Activated T-helper 2 cell treated with anti-CD3 and anti-CD28 coated beads, Interferon-gamma antibody, Interleukin-2, Interleukin-4, amounts not matched to agents 10 μg/mL and 5 μg/mL and 100 μg/mL, durations not matched to agents 14 hours and 24 hours and 36 hours (primary cell): ENCODE measurements at regions of chr17 and their contacts with region 1.

Region 1: DNA sequence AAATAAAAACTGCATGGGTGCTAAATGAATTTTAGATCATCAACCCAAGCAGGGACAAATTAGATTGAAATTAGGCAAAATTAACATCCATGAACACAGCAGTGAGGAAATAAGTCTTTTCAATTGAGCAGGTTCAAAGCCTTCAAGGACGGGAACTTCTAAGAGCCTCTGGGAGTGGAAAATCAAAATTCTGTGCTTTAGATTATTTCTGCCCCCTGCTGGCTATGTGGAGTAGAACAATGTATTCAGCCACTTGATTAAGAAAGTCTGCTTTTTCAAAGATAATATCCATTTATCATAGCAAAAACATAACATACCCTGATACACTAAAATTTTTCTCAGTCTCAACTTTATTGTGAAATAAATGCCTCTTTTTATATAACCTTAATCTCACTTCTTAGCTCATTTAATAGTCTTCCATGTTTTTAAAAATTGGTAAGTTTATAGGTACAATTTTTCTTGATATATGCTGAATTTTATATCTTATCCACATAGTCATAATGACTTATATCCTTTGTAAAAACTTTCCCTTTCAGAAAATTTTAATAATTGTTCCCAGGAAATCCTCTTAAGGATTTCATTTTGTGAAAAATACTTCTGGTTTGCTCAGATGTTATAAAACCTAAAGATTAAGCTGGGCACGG is 28.1 kb upstream of the NOL11 start:
- DNase-seq: peak; percentile 23
- H3K4me3 Mint-ChIP-seq: no peak overlapping the region
- H3K27ac Mint-ChIP-seq: no peak overlapping the region
- H3K4me1 Mint-ChIP-seq: peaks cover 3% of the 10 kb centered on the region
- H3K27me3 Mint-ChIP-seq: no peaks in the 10 kb centered on the region

Region 2: DNA sequence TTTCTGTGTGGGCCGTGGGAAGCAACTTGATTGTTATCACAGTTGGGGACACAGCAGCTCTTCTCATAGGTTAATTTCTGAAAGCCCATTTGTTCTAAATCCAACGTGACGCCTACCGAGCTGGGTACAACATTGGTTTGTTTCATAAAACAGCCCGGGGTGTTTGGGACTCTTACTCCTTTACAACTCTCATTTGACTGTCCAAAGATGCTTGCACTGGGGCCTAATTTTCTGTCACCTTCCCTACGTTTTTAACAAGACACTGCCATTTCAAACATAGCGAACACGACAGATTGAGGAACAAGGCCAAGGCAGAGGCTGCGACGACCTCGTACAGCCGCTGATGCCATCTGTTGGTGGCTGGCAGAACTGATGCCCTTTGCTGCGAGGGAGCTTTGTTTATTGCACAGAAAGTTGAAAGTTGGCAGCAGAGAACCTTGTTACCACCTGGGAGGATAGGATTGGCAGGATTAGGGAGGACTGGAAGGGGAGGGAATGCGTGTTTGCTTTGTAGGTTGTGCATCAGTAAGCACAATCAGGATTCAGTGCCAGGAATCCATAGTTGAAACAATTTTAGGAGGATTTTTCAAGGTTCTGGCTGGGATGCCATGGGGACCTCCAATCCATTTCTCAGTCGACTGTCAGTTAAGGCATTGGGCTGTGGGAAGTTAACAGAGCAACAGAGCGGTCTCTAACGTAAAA is 214.3 kb before region 1 on chr17:
- intact Hi-C with region 1: loop called (anchors 1 kb)
- DNase-seq: peak; percentile 77
- H3K4me3 Mint-ChIP-seq: peak overlapping the region; percentile 30
- H3K27ac Mint-ChIP-seq: peak overlapping the region; percentile 62
- H3K4me1 Mint-ChIP-seq: peaks cover 44% of the 10 kb centered on the region
- H3K27me3 Mint-ChIP-seq: peaks cover 3% of the 10 kb centered on the region

Region 3: DNA sequence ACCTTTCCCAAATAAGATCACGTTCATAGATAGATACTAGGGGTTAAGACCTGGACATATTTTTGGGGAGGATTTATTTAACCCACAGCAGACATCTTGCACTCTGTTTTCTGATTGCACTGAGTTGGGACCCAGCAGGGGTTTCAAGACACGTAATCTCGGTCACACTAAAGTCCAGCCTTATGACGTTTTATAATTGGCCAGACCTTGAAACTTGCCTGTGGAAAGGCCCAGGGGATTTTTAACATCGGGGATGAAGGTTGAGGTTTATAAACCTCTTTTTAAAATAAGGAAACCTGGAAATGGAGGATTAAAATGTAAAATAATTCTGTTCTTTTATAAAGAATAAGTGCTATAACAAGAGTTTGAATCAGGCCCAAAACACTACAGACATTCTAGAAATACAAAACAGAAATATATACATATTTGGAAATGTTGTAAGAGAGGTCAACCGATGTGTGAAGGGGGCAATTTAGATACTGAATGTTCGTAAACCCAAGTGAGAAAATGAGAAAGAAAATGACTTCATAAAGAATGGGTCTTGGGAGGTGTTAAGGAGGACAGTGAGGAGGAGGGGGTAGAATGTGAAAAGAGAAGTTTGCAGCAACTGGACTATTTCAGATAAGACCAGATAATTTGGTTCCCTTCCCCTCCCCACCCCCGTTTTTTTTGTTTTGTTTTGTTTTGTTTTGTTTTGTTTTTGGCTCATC is 33.0 kb before region 1 on chr17:
- intact Hi-C with region 1: no loop called
- DNase-seq: no peak
- H3K4me3 Mint-ChIP-seq: no peak overlapping the region
- H3K27ac Mint-ChIP-seq: no peak overlapping the region
- H3K4me1 Mint-ChIP-seq: no peaks in the 10 kb centered on the region
- H3K27me3 Mint-ChIP-seq: no peaks in the 10 kb centered on the region

Region 4: GRCh38 chr17:67671492-67671891 is 18.2 kb before region 1 on chr17:
- intact Hi-C with region 1: no loop called
- DNase-seq: no peak
- H3K4me3 Mint-ChIP-seq: no peak overlapping the region
- H3K27ac Mint-ChIP-seq: no peak overlapping the region
- H3K4me1 Mint-ChIP-seq: no peaks in the 10 kb centered on the region
- H3K27me3 Mint-ChIP-seq: no peaks in the 10 kb centered on the region